ENCODE measurements at regions of chr19 and their contacts with region 1.

Region 1: DNA sequence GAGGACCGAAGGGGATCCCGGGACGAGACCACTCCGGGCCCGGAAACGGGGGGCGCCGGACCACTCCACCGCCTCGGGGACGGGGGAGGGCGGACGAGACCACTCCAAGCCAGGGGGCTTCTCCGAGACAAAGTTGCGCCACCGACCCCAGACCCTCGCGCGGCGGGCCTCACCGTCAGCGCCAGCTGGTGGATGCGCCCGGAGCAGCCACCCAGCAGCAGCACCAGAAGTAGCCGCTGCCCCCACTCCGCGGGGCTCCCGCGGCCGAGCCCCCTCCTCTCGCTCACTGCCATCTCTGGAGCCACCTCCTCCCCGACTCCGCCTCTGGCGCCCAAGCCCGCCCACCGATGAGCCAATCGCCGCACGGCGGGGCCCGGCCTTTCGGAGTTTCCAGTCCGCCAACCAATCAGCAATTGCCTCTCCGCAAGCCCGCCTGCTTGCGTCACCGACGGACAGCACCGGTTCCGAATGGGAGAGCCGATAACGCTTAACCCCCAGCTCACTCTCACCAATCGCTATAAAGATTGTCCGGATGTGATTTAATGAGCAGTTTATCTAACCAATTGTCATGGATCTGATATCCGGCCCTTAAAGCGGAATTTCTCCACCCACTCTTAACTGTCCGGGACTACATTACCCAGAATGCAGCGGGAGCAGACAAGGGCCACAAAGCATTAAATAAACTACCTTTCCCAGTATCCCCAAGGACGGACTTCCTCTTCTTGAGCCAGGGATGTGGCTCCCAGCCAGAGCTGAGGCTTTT is at the start of gene GPR108:
- DNase-seq: peak; percentile 100
- H3K4me3 ChIP-seq: peak within 1 kb of the TSS; percentile 83
- H3K27ac ChIP-seq: peak within 1 kb of the TSS; percentile 74
- H3K4me1 ChIP-seq: peaks cover 53% of the 10 kb centered on the region
- CTCF ChIP-seq: no peak
- total RNA-seq, gene GPR108: 77.5 and 88.3 TPM in 2 replicates

Region 2: DNA sequence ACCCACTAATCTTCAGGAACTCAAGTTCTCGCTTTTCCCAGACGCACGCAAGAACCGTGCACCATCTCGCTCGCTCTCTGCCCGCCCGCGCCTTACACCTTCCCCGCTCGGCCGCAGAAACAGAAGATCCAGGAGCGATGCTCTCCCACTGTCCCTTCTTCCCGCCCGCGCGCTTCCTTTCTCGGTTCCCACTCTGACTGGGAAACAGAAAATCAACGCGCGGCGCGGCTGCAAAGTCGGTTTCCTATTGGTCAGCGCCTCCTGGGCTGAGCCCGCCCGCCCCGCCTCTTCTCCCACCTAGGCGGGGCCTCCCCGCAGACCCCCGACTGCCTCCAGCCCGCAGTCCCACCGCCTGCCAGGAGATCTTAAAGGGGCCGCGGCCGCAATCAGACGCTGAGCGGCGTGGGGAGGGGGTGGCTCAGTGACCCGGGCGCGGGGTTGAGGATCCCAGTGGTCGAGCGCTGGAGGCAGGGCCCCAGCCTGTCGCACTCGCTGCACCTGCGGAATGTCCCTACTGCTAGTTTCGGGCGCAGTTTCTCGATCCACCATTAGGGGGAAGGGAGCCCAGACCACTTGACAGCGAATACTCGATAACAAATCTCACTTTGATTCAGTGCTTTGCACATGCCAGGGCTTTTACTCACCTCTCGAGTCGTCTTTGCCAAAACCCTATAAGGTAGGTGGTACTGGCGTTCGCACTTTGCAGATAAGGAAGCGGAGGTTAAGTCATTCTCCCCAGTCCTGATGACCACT is 277.2 kb before region 1 on chr19:
- CTCF ChIA-PET with region 1: no interaction called
- POLR2A ChIA-PET with region 1: no interaction called
- intact Hi-C with region 1: loop called (anchors 2 kb)
- DNase-seq: peak; percentile 100
- H3K4me3 ChIP-seq: peak overlapping the region; percentile 89
- H3K27ac ChIP-seq: peak overlapping the region; percentile 62
- H3K4me1 ChIP-seq: peaks cover 20% of the 10 kb centered on the region
- CTCF ChIP-seq: peak; percentile 85

Region 3: DNA sequence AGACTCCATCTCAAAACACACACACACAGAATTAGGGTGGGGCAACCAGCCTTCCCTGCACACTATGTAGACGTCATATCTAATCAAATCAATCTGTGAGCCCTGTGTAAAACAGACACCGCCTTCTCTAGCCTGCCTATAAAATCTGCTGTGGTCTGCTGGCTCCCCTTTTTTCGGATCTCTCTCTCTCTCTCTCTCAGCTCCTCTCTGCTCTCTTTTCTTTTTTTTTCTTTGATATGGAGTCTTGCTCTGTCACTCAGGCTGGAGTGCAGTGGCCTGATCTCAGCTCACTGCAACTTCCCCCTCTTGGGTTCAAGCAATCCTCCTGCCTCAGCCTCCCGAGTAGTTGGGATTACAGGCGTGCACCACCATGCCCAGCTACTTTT is 134.7 kb before region 1 on chr19:
- CTCF ChIA-PET with region 1: no interaction called
- POLR2A ChIA-PET with region 1: no interaction called
- intact Hi-C with region 1: loop called (anchors 5 kb)
- DNase-seq: peak; percentile 87
- H3K4me3 ChIP-seq: peak overlapping the region; percentile 74
- H3K27ac ChIP-seq: peak overlapping the region; percentile 92
- H3K4me1 ChIP-seq: peaks cover 78% of the 10 kb centered on the region
- CTCF ChIP-seq: no peak

Region 4: GRCh38 chr19:6713773-6714692 is 23.4 kb before region 1 on chr19:
- CTCF ChIA-PET with region 1: no interaction called
- POLR2A ChIA-PET with region 1: no interaction called
- intact Hi-C with region 1: no loop called
- DNase-seq: no peak
- H3K4me3 ChIP-seq: no peak overlapping the region
- H3K27ac ChIP-seq: no peak overlapping the region
- H3K4me1 ChIP-seq: peaks cover 3% of the 10 kb centered on the region
- CTCF ChIP-seq: no peak

Region 5: DNA sequence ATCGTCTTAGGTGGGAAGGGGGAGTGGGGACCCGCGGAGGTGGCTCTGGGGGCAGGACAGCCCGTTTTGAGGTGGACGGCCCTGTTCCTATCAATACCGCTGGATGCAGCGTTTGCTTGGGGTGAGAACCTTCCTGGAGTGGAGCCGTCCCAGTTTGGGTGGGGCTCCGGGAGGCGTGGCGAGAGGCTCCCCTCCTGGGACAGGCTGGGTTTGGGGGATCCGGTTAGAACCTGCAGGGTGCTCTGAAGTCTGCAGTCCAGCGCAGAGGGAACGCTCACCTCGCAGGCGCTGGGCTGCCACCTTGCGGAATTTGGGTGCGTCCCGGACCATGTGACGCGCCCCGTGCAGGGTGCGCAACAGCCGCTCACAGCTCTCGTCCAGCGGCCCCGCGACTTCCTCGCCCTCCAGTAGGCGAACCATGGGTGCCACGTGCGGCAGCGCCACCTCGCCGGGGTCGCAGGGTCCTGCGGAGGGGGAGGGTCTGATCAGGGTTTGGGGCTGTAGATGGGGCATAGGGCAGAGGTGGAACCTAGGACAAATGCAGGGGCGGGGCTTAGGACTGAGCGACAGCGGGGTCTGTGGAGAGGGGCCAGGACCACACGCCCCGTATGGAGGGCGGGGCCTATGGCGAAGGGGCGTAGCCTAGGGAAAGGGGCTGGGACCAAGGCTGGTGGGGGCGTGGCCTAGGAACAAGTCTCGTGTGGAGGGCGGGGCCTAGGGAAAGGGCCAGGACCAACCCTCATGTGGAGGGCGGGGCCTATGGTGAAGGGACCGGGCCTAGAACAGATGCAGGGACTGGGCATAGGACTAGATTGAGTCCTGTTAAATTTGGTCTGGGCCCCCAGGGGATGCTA is 15.9 kb after region 1 on chr19:
- CTCF ChIA-PET with region 1: no interaction called
- POLR2A ChIA-PET with region 1: interaction called, 3 read pairs
- intact Hi-C with region 1: loop called (anchors 1 kb)
- DNase-seq: peak; percentile 99
- H3K4me3 ChIP-seq: peak overlapping the region; percentile 63
- H3K27ac ChIP-seq: peak overlapping the region; percentile 50
- H3K4me1 ChIP-seq: peaks cover 12% of the 10 kb centered on the region
- CTCF ChIP-seq: peak; percentile 84

Region 6: DNA sequence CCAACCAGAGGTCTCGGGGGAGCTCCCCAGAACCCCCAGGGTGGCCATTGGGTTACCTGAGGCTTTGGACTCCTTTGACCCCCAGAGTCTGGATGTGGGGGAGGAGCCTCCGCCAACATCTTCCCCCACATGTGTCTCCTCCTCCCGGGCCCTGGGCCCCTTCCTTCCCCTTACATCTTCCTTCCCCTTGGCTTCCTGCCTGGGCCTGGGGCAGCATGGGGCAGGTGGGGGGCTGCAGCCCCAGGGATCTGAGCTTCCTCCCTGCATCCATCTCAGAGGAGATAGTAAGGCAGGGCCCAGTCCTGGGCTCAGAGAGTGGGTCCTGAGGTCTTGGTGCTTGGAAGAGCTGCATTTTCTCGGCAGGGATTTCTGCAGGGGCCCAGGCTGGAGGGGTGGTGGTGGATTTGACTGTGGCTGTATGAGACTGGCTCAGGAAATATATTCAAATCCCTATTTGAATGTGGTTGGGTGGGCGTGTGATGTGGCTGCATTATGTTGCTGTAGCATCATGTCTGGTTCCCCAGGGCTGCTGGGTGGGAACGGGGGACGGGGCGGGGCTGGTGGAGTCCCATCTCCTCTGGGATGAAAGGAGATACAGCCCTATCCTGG is 36.0 kb after region 1 on chr19:
- CTCF ChIA-PET with region 1: no interaction called
- POLR2A ChIA-PET with region 1: interaction called, 8 read pairs
- intact Hi-C with region 1: loop called (anchors 1 kb)
- DNase-seq: peak; percentile 89
- H3K4me3 ChIP-seq: peak overlapping the region; percentile 83
- H3K27ac ChIP-seq: peak overlapping the region; percentile 88
- H3K4me1 ChIP-seq: peaks cover 37% of the 10 kb centered on the region
- CTCF ChIP-seq: no peak

Region 7: GRCh38 chr19:6833166-6833790 is 95.8 kb after region 1 on chr19:
- CTCF ChIA-PET with region 1: no interaction called
- POLR2A ChIA-PET with region 1: no interaction called
- intact Hi-C with region 1: no loop called
- DNase-seq: no peak
- H3K4me3 ChIP-seq: no peak overlapping the region
- H3K27ac ChIP-seq: no peak overlapping the region
- H3K4me1 ChIP-seq: no peaks in the 10 kb centered on the region
- CTCF ChIP-seq: no peak

Region 8: DNA sequence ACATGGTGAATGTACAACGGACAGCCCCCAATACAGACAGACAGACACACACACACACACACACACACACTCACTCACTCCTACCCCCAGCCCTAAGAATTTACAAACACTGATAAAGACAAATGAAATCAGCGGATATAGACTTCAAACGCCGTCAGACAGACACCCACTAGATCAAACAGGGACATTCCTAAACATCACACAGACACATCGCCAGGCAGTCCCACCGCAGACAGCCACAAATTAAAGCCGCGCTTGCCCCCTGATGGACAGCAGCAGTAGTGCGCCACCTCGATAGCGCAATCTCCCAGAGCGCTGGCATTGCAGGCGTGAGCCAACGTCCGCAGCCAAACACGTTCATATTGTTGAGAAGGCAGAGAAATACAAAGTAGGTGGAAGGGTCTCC is 125.2 kb after region 1 on chr19:
- CTCF ChIA-PET with region 1: interaction called, 5 read pairs
- POLR2A ChIA-PET with region 1: interaction called, 6 read pairs
- intact Hi-C with region 1: loop called (anchors 1 kb)
- DNase-seq: peak; percentile 96
- H3K4me3 ChIP-seq: peak overlapping the region; percentile 62
- H3K27ac ChIP-seq: peak overlapping the region; percentile 56
- H3K4me1 ChIP-seq: peaks cover 18% of the 10 kb centered on the region
- CTCF ChIP-seq: peak; percentile 100